ENCODE measurements at regions of chr7 and their contacts with region 1.

Region 1: GRCh38 chr7:7103343-7104313 is 78.7 kb upstream of the C1GALT1 start:
- DNase-seq: peak in 4 of 14 experiments; percentile 19 to 82 (median 81)
- ATAC-seq: peak; percentile 75
- H3K4me3 ChIP-seq: no peak overlapping the region
- H3K4me3 Mint-ChIP-seq: no peak overlapping the region
- H3K27ac ChIP-seq: no peak overlapping the region
- H3K27ac Mint-ChIP-seq: no peak overlapping the region
- H3K4me1 ChIP-seq: peaks cover 15% of the 10 kb centered on the region
- H3K4me1 Mint-ChIP-seq: peaks cover 29% of the 10 kb centered on the region
- H3K27me3 ChIP-seq: no peaks in the 10 kb centered on the region
- H3K27me3 Mint-ChIP-seq: no peaks in the 10 kb centered on the region
- CTCF ChIP-seq: peak; percentile 74

Region 2: GRCh38 chr7:7157177-7157886 is 53.7 kb after region 1 on chr7:
- CTCF ChIA-PET with region 1: no interaction called
- POLR2A ChIA-PET with region 1: interaction called, 15 read pairs
- intact Hi-C with region 1: loop called in 1 of 2 experiments (anchors 10 kb)
- DNase-seq: peak; percentile 31 to 92 (median 54)
- ATAC-seq: peak; percentile 96
- H3K4me3 ChIP-seq: peak overlapping the region; percentile 35
- H3K4me3 Mint-ChIP-seq: peak overlapping the region; percentile 64
- H3K27ac ChIP-seq: peak overlapping the region; percentile 50 to 72
- H3K27ac Mint-ChIP-seq: peak overlapping the region; percentile 85
- H3K4me1 ChIP-seq: peaks cover 24% of the 10 kb centered on the region
- H3K4me1 Mint-ChIP-seq: peaks cover 71% of the 10 kb centered on the region
- H3K27me3 ChIP-seq: no peaks in the 10 kb centered on the region
- H3K27me3 Mint-ChIP-seq: no peaks in the 10 kb centered on the region
- CTCF ChIP-seq: no peak

Region 3: DNA sequence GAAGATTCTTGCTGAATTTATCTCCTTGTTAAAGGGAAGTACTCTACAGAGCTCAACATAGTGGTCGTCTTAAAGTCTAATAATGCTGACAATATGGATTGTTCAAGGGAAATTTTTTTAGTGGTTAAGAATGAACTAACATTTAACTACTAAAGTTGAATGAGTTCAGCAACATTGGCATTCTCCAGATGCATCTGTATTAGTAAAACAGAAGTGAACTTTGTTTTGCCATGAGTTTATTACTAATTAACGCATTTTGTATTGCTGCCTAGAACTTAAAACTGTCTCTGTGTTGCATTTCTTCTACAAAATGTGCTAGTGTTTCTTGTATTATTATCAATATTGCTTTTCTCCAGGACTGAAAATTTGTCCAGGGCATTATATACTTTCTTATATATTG is 146.2 kb after region 1 on chr7:
- CTCF ChIA-PET with region 1: no interaction called
- POLR2A ChIA-PET with region 1: no interaction called
- intact Hi-C with region 1: loop called in 1 of 2 experiments (anchors 5 kb)
- DNase-seq: no peak
- ATAC-seq: no peak
- H3K4me3 ChIP-seq: no peak overlapping the region
- H3K4me3 Mint-ChIP-seq: no peak overlapping the region
- H3K27ac ChIP-seq: no peak overlapping the region
- H3K27ac Mint-ChIP-seq: no peak overlapping the region
- H3K4me1 ChIP-seq: no peaks in the 10 kb centered on the region
- H3K4me1 Mint-ChIP-seq: peaks cover 39% of the 10 kb centered on the region
- H3K27me3 ChIP-seq: no peaks in the 10 kb centered on the region
- H3K27me3 Mint-ChIP-seq: no peaks in the 10 kb centered on the region
- CTCF ChIP-seq: no peak

Region 4: GRCh38 chr7:7542251-7542835 is 438.7 kb after region 1 on chr7:
- CTCF ChIA-PET with region 1: interaction called, 6 read pairs
- POLR2A ChIA-PET with region 1: no interaction called
- intact Hi-C with region 1: loop called (anchors 1 kb)
- DNase-seq: no peak
- ATAC-seq: no peak
- H3K4me3 ChIP-seq: no peak overlapping the region
- H3K4me3 Mint-ChIP-seq: no peak overlapping the region
- H3K27ac ChIP-seq: no peak overlapping the region
- H3K27ac Mint-ChIP-seq: no peak overlapping the region
- H3K4me1 ChIP-seq: no peaks in the 10 kb centered on the region
- H3K4me1 Mint-ChIP-seq: no peaks in the 10 kb centered on the region
- H3K27me3 ChIP-seq: no peaks in the 10 kb centered on the region
- H3K27me3 Mint-ChIP-seq: peaks cover 9% of the 10 kb centered on the region
- CTCF ChIP-seq: no peak

Region 5: DNA sequence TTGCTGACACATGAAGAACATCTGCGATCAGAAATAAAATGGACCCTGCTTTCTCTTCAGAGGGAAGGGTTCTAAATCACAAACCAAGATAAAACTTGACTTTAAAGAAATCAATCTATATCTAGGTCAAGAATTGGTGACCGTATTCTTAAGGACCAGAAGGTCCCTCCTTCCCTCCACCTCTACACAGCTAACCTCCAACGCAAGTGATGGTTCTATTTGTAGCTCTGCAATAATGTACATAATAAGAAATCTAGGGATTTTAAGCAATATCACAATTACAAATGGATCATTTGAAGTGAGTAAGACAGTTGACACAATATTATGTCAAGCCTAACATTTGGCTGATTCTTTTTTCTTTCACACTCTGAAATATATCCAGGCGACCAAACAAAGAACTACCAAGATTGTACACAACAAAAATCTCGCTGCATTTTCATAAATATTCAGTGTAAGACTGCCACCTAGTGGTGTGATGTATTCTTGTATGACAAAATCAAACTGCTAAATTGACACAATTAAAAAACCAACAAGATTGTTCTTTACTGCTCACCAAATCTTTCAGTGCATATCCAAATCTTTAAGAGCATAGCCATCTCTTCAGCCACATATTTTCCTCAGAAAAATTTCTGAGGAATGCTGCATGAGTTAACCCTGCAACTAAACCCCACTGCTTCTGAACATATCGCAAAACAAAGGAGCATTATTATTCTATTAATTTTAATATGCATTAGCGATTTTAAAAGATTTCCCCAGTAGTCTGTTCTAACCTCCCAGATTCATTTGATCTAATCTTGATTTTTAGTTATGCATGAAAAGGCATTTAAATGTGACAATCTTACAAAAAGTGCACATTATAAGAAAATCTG is 1113.8 kb after region 1 on chr7:
- CTCF ChIA-PET with region 1: no interaction called
- POLR2A ChIA-PET with region 1: no interaction called
- intact Hi-C with region 1: loop called (anchors 2 to 5 kb)
- DNase-seq: peak in 5 of 14 experiments; percentile 8 to 84 (median 75)
- ATAC-seq: peak; percentile 71
- H3K4me3 ChIP-seq: no peak overlapping the region
- H3K4me3 Mint-ChIP-seq: no peak overlapping the region
- H3K27ac ChIP-seq: no peak overlapping the region
- H3K27ac Mint-ChIP-seq: no peak overlapping the region
- H3K4me1 ChIP-seq: no peaks in the 10 kb centered on the region
- H3K4me1 Mint-ChIP-seq: peaks cover 5% of the 10 kb centered on the region
- H3K27me3 ChIP-seq: no peaks in the 10 kb centered on the region
- H3K27me3 Mint-ChIP-seq: no peaks in the 10 kb centered on the region
- CTCF ChIP-seq: peak; percentile 87

Measured in CD4-positive, alpha-beta T cell (primary cell).